Activated CD4-positive, alpha-beta T cell treated with anti-CD3 and anti-CD28 coated beads, Interleukin-2, amount 10 ng/mL, durations not matched to agents 7 days and 5 days (primary cell): ENCODE measurements at regions of chr19 and their contacts with region 1.

Region 1: DNA sequence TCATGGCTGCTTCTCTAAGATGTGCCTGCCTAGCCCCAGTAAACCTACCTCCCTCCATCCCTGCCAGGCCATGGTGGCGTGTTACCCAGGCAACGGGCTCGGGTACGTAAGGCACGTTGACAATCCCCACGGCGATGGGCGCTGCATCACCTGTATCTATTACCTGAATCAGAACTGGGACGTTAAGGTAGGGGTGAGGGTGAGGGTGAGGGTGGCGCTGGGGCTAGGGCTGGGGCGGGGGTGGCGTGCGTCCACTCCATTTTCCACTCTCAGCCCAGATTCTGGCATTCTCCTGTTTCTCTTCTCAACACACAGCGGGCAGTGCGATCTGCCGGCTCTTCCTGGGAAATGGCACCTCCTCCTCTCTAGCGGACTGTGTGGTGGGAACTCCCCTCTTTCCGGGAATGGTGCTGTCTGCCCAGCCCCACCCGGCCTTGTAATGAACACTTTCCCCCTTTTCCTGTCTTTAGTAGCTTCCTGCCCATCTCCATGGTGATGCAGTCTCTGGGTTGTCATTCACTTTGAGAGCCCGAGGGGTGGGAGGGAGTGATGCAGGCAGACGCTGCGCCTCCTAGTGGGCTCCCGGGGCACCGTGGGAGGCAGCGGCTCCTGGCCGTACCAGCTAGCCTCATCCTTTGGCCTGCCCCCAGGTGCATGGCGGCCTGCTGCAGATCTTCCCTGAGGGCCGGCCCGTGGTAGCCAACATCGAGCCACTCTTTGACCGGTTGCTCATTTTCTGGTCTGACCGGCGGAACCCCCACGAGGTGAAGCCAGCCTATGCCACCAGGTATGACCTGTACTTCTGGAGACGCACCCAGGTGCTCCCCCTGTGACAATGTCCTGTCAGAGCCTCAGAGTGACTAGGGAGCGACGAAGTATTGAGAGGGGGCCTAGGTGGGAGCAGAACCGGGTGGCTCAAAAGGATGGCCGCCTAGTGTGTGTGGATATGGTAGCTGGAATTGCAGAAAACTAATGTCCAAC is 7.8 kb downstream of the EGLN2 start:
- DNase-seq: peak; percentile 80
- H3K4me3 Mint-ChIP-seq: peak overlapping the region; percentile 67
- H3K27ac Mint-ChIP-seq: peak overlapping the region; percentile 88
- H3K4me1 Mint-ChIP-seq: peaks cover 88% of the 10 kb centered on the region
- H3K27me3 Mint-ChIP-seq: peaks cover 5% of the 10 kb centered on the region

Region 2: GRCh38 chr19:40662921-40663694 is 143.7 kb before region 1 on chr19:
- CTCF ChIA-PET with region 1: interaction called, 26 read pairs
- POLR2A ChIA-PET with region 1: no interaction called
- DNase-seq: peak; percentile 90
- H3K4me3 Mint-ChIP-seq: peak overlapping the region; percentile 76
- H3K27ac Mint-ChIP-seq: peak overlapping the region; percentile 89
- H3K4me1 Mint-ChIP-seq: peaks cover 16% of the 10 kb centered on the region
- H3K27me3 Mint-ChIP-seq: no peaks in the 10 kb centered on the region

Region 3: GRCh38 chr19:40750059-40750873 is 56.5 kb before region 1 on chr19 and contains the start of gene ACTMAP:
- CTCF ChIA-PET with region 1: interaction called, 14 read pairs
- POLR2A ChIA-PET with region 1: interaction called, 3 read pairs
- DNase-seq: peak; percentile 100
- H3K4me3 Mint-ChIP-seq: peak within 1 kb of the TSS; percentile 100
- H3K27ac Mint-ChIP-seq: peak within 1 kb of the TSS; percentile 100
- H3K4me1 Mint-ChIP-seq: peaks cover 40% of the 10 kb centered on the region
- H3K27me3 Mint-ChIP-seq: no peaks in the 10 kb centered on the region
- total RNA-seq, gene ACTMAP: 17.5 to 19.8 TPM

Region 4: GRCh38 chr19:40777937-40778705 is 28.7 kb before region 1 on chr19 and contains the start of gene RAB4B:
- CTCF ChIA-PET with region 1: interaction called, 21 read pairs
- POLR2A ChIA-PET with region 1: no interaction called
- DNase-seq: peak; percentile 100
- H3K4me3 Mint-ChIP-seq: peak within 1 kb of the TSS; percentile 89
- H3K27ac Mint-ChIP-seq: peak within 1 kb of the TSS; percentile 99
- H3K4me1 Mint-ChIP-seq: peaks cover 39% of the 10 kb centered on the region
- H3K27me3 Mint-ChIP-seq: no peaks in the 10 kb centered on the region
- total RNA-seq, gene RAB4B: 52.8 to 54.7 TPM

Region 5: DNA sequence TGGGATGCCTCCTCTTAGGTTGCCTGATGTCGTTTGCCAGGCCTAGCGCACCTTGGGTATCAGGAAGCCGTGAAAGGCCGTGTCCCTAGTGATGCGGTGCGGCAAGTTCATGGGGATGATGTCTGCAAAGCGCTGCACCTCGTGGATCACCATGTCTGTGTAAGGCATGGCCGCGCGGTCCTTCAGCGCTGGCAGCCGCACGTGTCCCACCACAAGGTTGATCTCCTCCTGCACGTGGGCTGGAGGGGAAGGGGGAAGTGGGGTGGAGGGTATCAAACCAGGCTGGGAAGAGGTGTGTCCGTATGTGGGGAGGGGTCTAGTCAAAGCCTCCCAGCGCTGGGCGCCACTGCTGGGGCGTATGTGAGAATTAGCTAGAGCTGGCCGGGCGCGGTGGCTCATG is 15.4 kb after region 1 on chr19:
- CTCF ChIA-PET with region 1: interaction called, 20 read pairs
- POLR2A ChIA-PET with region 1: no interaction called
- DNase-seq: no peak
- H3K4me3 Mint-ChIP-seq: no peak overlapping the region
- H3K27ac Mint-ChIP-seq: no peak overlapping the region
- H3K4me1 Mint-ChIP-seq: peaks cover 51% of the 10 kb centered on the region
- H3K27me3 Mint-ChIP-seq: no peaks in the 10 kb centered on the region

Region 6: GRCh38 chr19:40862785-40863184 is 56.0 kb after region 1 on chr19:
- CTCF ChIA-PET with region 1: no interaction called
- POLR2A ChIA-PET with region 1: no interaction called
- DNase-seq: no peak
- H3K4me3 Mint-ChIP-seq: no peak overlapping the region
- H3K27ac Mint-ChIP-seq: no peak overlapping the region
- H3K4me1 Mint-ChIP-seq: no peaks in the 10 kb centered on the region
- H3K27me3 Mint-ChIP-seq: peaks cover 20% of the 10 kb centered on the region

Region 7: GRCh38 chr19:41083516-41083915 is 276.7 kb after region 1 on chr19:
- CTCF ChIA-PET with region 1: no interaction called
- POLR2A ChIA-PET with region 1: no interaction called
- DNase-seq: no peak
- H3K4me3 Mint-ChIP-seq: no peak overlapping the region
- H3K27ac Mint-ChIP-seq: no peak overlapping the region
- H3K4me1 Mint-ChIP-seq: no peaks in the 10 kb centered on the region
- H3K27me3 Mint-ChIP-seq: peaks cover 36% of the 10 kb centered on the region